Activated CD4-positive, alpha-beta T cell treated with anti-CD3 and anti-CD28 coated beads, Interleukin-2, amount 10 ng/mL, durations not matched to agents 7 days and 5 days (primary cell): ENCODE measurements at regions of chr12 and their contacts with region 1.

Region 1: GRCh38 chr12:121626087-121626852 is at the start of gene ORAI1:
- DNase-seq: peak; percentile 96
- H3K4me3 Mint-ChIP-seq: peak within 1 kb of the TSS; percentile 97
- H3K27ac Mint-ChIP-seq: peak within 1 kb of the TSS; percentile 94
- H3K4me1 Mint-ChIP-seq: peaks cover 49% of the 10 kb centered on the region
- H3K27me3 Mint-ChIP-seq: no peaks in the 10 kb centered on the region
- total RNA-seq, gene ORAI1: 66.4 to 70.8 TPM

Region 2: GRCh38 chr12:121223292-121224285 is 402.7 kb before region 1 on chr12:
- CTCF ChIA-PET with region 1: no interaction called
- POLR2A ChIA-PET with region 1: no interaction called
- DNase-seq: peak; percentile 65
- H3K4me3 Mint-ChIP-seq: peak overlapping the region; percentile 48
- H3K27ac Mint-ChIP-seq: peak overlapping the region; percentile 91
- H3K4me1 Mint-ChIP-seq: peaks cover 72% of the 10 kb centered on the region
- H3K27me3 Mint-ChIP-seq: no peaks in the 10 kb centered on the region

Region 3: GRCh38 chr12:121383601-121384021 is 242.7 kb before region 1 on chr12:
- CTCF ChIA-PET with region 1: no interaction called
- POLR2A ChIA-PET with region 1: no interaction called
- DNase-seq: no peak
- H3K4me3 Mint-ChIP-seq: no peak overlapping the region
- H3K27ac Mint-ChIP-seq: no peak overlapping the region
- H3K4me1 Mint-ChIP-seq: peaks cover 5% of the 10 kb centered on the region
- H3K27me3 Mint-ChIP-seq: peaks cover 4% of the 10 kb centered on the region

Region 4: DNA sequence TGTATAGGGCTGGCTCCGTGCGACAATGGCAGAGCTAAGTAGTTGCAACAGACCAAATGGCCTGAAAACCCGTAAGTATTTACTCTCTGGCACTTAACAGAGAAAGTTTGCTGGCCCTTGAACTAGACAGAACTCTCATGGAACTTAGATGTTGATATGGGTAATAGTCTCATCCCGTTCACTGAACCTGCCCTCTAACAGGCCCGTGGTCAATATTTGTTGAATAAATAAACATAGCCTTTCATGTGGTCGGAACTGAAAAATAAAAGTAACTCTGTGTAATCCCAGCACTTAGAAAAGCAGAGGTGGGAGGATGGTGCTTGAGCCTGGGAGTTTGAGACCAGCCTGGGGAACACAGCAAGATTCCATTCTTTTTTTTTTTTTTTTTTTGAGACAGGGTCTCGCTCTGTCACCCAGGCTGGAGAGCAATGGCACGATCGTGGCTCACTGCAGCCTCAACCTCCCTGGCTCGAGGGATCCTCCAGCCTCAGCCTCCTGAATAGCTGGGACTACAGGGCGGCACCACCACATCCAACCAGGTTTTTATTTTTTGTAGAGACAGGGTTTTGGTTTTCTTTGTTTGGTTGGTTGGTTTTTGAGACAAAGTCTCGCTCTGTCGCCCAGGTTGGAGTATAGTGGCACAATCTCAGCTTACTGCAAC is 75.2 kb before region 1 on chr12:
- CTCF ChIA-PET with region 1: interaction called, 13 read pairs
- POLR2A ChIA-PET with region 1: interaction called, 7 read pairs
- DNase-seq: no peak
- H3K4me3 Mint-ChIP-seq: no peak overlapping the region
- H3K27ac Mint-ChIP-seq: no peak overlapping the region
- H3K4me1 Mint-ChIP-seq: peaks cover 17% of the 10 kb centered on the region
- H3K27me3 Mint-ChIP-seq: no peaks in the 10 kb centered on the region

Region 5: DNA sequence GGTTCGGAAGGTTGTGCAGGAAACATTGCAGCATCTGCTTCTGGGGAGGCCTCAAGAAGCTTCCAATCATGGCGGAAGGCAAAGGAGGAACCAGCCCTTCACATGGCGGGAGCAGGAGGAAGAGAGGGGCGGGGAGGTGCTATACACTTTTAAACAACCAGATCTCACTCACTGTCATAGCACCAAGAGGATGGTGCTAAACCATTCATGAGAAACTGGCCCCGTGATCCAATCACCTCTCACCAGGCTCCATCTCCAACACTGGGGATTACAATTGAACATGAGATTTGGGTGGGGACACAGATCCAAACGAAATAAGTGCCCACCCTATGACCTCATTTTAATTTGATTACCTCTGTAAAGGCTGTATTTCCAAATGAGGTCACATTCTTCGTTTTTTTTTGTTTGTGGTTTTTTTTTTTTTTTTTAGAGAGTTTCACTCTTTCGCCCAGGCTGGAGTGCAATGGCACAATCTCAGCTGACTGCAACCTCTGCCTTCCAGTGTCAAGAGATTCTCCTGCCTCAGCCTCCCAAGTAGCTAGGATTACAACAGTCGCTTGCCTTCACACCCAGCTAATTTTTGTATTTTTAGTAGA is 11.3 kb before region 1 on chr12:
- CTCF ChIA-PET with region 1: interaction called, 6 read pairs
- POLR2A ChIA-PET with region 1: interaction called, 12 read pairs
- DNase-seq: no peak
- H3K4me3 Mint-ChIP-seq: no peak overlapping the region
- H3K27ac Mint-ChIP-seq: peak overlapping the region; percentile 3
- H3K4me1 Mint-ChIP-seq: peaks cover 26% of the 10 kb centered on the region
- H3K27me3 Mint-ChIP-seq: no peaks in the 10 kb centered on the region

Region 6: DNA sequence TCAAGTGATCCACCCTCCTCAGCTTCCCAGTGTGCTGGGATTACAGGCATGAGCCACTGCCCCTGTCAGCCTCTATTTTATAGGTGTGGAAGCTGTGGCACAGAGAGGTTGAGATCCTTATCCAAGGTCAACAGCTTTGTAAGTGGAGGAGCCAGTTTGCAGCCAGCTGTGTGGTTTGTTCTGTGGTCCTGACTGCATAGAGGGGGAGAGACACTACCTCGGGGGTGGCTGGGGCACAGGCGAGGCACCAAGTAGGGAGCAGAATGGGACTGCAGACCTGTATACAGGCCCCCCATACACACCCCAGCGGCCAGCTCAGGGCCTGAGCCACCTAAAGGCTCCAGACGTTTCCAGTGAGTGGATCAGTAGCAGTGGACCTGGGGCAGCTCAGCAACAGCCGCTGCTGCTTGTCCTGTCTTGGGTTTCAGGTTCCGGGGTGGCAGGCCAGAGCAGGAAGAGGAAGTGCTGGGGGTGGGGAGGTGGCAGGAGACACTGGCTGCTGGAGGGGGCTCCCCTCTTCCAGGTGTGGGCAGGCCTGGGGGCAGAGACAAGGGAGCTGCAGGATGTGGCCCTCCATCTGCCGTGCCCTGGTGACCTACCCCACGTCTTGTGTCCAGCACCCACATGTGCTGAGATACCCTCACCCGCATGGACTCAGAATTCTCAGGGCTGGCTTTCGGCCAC is 11.1 kb after region 1 on chr12:
- CTCF ChIA-PET with region 1: interaction called, 16 read pairs
- POLR2A ChIA-PET with region 1: interaction called, 3 read pairs
- DNase-seq: peak; percentile 67
- H3K4me3 Mint-ChIP-seq: peak overlapping the region; percentile 64
- H3K27ac Mint-ChIP-seq: peak overlapping the region; percentile 93
- H3K4me1 Mint-ChIP-seq: peaks cover 67% of the 10 kb centered on the region
- H3K27me3 Mint-ChIP-seq: no peaks in the 10 kb centered on the region

Region 7: DNA sequence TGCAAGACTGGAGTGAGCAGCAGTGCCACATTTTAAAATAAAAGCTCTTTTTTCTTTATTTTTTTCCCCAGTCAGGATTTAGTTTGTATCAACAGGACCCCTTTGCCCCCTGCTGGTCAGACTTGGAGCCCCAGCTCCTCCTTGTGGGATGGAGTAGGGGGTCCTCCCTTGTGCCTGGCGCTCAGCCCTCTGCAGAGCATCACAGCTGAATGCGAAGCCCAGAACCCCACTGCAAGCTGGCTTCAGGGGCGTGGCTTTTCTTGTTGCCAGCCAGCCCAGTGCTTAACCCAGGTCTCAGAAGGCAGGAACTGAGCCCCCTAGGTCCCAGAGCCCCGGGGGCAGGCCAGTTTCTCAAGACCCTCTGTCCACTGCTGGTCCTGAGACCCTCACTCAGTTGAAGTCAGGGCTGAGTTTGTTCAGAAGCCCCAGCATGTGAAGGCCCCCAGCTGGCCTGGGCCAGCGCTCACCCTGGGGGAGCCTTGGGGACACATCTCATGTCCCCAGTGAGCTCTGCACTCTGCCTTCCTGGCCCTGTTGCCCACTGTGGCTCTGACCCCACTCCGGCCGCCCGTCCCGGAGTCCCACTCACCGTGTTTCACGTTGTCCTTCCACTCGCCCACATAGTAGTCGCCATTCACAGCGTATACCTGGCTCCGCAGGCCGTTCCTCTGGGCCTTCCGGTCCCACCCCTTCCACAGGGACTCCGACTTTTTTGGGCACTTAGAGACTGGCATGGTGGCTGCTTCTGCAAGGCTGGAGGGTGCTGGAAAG is 42.7 kb after region 1 on chr12:
- CTCF ChIA-PET with region 1: interaction called, 12 read pairs
- POLR2A ChIA-PET with region 1: interaction called, 4 read pairs
- DNase-seq: peak; percentile 67
- H3K4me3 Mint-ChIP-seq: no peak overlapping the region
- H3K27ac Mint-ChIP-seq: peak overlapping the region; percentile 73
- H3K4me1 Mint-ChIP-seq: peaks cover 64% of the 10 kb centered on the region
- H3K27me3 Mint-ChIP-seq: no peaks in the 10 kb centered on the region

Region 8: DNA sequence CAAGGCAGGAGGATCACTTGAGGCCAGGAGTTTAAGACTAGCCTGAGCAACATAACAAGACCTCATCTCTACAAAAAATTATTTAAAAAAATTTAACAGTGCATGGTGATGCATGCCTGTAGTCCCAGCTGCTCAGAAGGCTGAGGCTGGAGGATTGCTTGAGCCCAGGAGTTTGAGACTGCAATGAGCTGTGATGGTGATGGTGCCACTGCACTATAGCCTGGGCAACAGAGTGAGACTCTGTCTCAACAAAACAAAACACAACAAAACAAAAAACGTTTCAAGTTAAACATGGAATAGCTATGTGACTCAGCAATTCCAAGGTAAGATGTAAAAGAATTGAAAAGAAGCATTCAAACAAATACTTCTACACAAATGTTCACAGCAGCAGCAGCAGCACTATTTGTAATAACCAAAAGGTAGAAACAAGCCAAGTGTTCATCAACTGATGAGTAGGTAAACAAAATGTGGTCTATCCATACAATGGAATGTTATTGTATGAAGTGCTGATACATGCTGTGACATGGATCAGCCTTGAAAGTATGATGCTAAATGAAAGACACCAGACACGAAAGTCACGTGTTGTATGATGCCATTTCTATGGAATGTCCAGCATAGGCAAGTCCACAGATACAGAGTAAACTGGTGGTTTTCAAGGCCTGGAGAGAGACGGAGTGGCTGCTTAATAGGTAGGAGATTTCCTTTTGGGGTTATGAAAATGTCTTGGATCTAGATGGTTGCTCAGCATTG is 323.6 kb after region 1 on chr12:
- CTCF ChIA-PET with region 1: no interaction called
- POLR2A ChIA-PET with region 1: no interaction called
- DNase-seq: no peak
- H3K4me3 Mint-ChIP-seq: no peak overlapping the region
- H3K27ac Mint-ChIP-seq: no peak overlapping the region
- H3K4me1 Mint-ChIP-seq: no peaks in the 10 kb centered on the region
- H3K27me3 Mint-ChIP-seq: peaks cover 8% of the 10 kb centered on the region